ENCODE measurements at regions of chr4 and their contacts with region 1.

Region 1: DNA sequence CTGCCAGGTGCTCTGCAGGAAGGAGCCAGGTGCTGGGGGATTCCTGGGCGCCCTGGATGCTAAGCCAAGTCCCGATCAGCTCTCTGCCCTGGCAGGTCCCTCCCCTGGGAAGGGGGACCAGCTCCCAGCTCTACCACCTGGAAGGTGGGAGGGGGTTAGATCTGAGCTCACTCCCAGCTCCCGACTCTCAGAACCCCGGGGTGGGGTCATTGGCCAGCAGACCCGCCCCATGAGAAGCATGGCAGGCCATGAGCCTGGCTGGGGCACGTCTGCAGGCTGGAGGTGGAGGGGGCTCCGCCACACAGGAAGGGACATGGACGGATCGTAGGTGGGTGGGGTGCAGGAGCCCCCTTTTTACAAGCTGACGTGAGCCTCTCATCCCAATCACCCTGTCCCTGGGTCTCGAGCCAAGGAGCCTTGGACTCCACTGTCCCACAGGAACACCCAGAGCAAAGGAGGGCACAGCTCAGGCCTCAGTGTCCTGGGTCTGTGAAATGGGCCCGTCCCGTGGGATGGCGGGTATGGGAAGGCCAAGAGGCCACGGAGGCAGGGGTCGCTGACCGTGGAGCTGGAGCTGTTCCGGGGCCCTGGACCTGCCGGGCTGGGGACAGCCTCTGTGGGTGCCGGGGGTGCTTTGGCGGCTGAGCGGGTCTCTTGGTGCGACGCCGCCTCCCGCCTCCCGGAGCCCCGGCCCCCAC is 83.6 kb upstream of the NKX1-1 start:
- DNase-seq: peak in 4 of 10 donors; percentile 20 to 39 (median 32)
- H3K4me3 ChIP-seq: no peak overlapping the region
- H3K27ac ChIP-seq: no peak overlapping the region
- H3K27me3 ChIP-seq: peaks cover 0 to 63% (median 42%) of the 10 kb centered on the region in 45 donors
- CTCF ChIP-seq: no peak

Region 2: GRCh38 chr4:1535926-1536578 is 46.3 kb after region 1 on chr4:
- intact Hi-C with region 1: loop called in 1 of 2 experiments (anchors 2 kb)
- DNase-seq: no peak
- H3K4me3 ChIP-seq: no peak overlapping the region
- H3K27ac ChIP-seq: no peak overlapping the region
- H3K27me3 ChIP-seq: peaks cover 0 to 48% (median 11%) of the 10 kb centered on the region in 45 donors
- CTCF ChIP-seq: no peak

Region 3: DNA sequence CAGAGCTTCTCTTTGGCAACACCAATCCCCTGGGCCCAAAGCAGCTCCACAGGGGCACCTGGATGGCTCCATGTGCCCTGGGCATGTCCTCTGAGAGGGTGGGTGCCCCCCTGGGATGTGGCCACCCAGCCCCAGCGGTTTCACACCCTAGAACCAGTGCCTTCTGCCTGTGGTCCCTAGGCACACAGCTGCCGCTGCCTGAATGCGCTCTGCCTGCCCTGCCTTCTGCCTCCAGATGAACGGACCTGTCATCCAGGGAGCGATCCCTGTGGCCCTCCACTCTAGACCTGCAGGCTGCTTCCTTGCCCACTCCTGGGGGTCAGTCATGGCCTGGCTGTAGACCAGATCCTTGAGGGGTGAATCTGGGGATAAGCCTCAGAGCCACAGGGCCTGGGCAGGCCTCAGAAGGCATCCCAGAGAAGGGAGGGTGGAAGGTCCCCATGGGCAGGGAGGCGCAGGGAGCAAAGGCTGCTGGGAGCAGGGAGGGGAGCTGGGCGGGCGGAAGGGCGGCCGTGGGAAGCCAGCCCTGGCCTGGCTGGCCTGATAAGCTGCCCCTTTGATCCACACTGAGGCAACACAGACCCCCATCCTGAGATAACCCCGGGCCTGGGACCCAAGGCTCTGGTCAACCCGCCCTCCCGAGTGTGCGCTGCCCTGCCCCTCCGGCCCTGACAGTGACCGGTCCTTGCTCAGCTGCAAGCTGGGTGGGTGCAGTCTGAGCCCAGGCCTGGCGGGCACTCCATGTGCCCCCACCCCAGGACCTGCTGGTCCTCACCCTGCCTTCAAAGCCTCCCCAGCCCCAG is 295.2 kb after region 1 on chr4:
- intact Hi-C with region 1: no loop called
- DNase-seq: no peak
- H3K4me3 ChIP-seq: no peak overlapping the region
- H3K27ac ChIP-seq: peak overlapping the region in 28 of 59 donors; percentile 18 to 76 (median 57)
- H3K27me3 ChIP-seq: no peaks in the 10 kb centered on the region
- CTCF ChIP-seq: no peak

Measured in dorsolateral prefrontal cortex (tissue), 120 donors.